ENCODE measurements at regions of chr5 and their contacts with region 1.

Region 1: GRCh38 chr5:139633295-139634027 is 14.7 kb upstream of the CXXC5 start:
- DNase-seq: peak in 1 of 2 donors; percentile 80
- H3K4me3 ChIP-seq: no peak overlapping the region
- H3K27ac ChIP-seq: no peak overlapping the region
- H3K4me1 ChIP-seq: peaks cover 5 to 36% (median 24%) of the 10 kb centered on the region in 4 donors
- H3K27me3 ChIP-seq: no peaks in the 10 kb centered on the region
- CTCF ChIP-seq: peak; percentile 96 to 98

Region 2: GRCh38 chr5:139439013-139439903 is 194.2 kb before region 1 on chr5 and contains the start of gene DNAJC18:
- intact Hi-C with region 1: no loop called
- DNase-seq: peak; percentile 96 to 97
- H3K4me3 ChIP-seq: peak within 1 kb of the TSS; percentile 62 to 81
- H3K27ac ChIP-seq: peak within 1 kb of the TSS; percentile 92 to 97
- H3K4me1 ChIP-seq: peaks cover 0 to 19% (median 8%) of the 10 kb centered on the region in 4 donors
- H3K27me3 ChIP-seq: no peaks in the 10 kb centered on the region
- CTCF ChIP-seq: no peak

Region 3: GRCh38 chr5:139690064-139690802 is 56.8 kb after region 1 on chr5:
- intact Hi-C with region 1: loop called (anchors 2 kb)
- DNase-seq: peak in 1 of 2 donors; percentile 83
- H3K4me3 ChIP-seq: no peak overlapping the region
- H3K27ac ChIP-seq: peak overlapping the region; percentile 26 to 57
- H3K4me1 ChIP-seq: peaks cover 0 to 53% (median 39%) of the 10 kb centered on the region in 4 donors
- H3K27me3 ChIP-seq: no peaks in the 10 kb centered on the region
- CTCF ChIP-seq: peak; percentile 65 to 69

Region 4: GRCh38 chr5:139765409-139766217 is 132.2 kb after region 1 on chr5:
- intact Hi-C with region 1: loop called (anchors 2 kb)
- DNase-seq: peak; percentile 61 to 87
- H3K4me3 ChIP-seq: peak overlapping the region; percentile 46 to 64
- H3K27ac ChIP-seq: peak overlapping the region in 1 of 2 donors; percentile 46
- H3K4me1 ChIP-seq: peaks cover 0 to 17% (median 13%) of the 10 kb centered on the region in 4 donors
- H3K27me3 ChIP-seq: peaks cover 0 to 19% of the 10 kb centered on the region in 2 donors
- CTCF ChIP-seq: peak; percentile 98 to 99

Region 5: GRCh38 chr5:139844472-139845145 is 211.1 kb after region 1 on chr5:
- intact Hi-C with region 1: loop called (anchors 10 kb)
- DNase-seq: peak; percentile 69 to 81
- H3K4me3 ChIP-seq: no peak overlapping the region
- H3K27ac ChIP-seq: no peak overlapping the region
- H3K4me1 ChIP-seq: peaks cover 0 to 13% (median 8%) of the 10 kb centered on the region in 4 donors
- H3K27me3 ChIP-seq: no peaks in the 10 kb centered on the region
- CTCF ChIP-seq: peak; percentile 57 to 63

Region 6: GRCh38 chr5:141369994-141370848 is 1736.8 kb after region 1 on chr5 and contains the start of gene PCDHGB3:
- intact Hi-C with region 1: no loop called
- DNase-seq: peak in 1 of 2 donors; percentile 37
- H3K4me3 ChIP-seq: peak within 1 kb of the TSS; percentile 28 to 35
- H3K27ac ChIP-seq: no peak within 1 kb of the TSS
- H3K4me1 ChIP-seq: no peaks in the 10 kb centered on the region
- H3K27me3 ChIP-seq: no peaks in the 10 kb centered on the region
- CTCF ChIP-seq: peak in 1 of 2 experiments; percentile 28